Gastrocnemius medialis (tissue), 4 donors: ENCODE measurements at regions of chr11 and their contacts with region 1.

Region 1: DNA sequence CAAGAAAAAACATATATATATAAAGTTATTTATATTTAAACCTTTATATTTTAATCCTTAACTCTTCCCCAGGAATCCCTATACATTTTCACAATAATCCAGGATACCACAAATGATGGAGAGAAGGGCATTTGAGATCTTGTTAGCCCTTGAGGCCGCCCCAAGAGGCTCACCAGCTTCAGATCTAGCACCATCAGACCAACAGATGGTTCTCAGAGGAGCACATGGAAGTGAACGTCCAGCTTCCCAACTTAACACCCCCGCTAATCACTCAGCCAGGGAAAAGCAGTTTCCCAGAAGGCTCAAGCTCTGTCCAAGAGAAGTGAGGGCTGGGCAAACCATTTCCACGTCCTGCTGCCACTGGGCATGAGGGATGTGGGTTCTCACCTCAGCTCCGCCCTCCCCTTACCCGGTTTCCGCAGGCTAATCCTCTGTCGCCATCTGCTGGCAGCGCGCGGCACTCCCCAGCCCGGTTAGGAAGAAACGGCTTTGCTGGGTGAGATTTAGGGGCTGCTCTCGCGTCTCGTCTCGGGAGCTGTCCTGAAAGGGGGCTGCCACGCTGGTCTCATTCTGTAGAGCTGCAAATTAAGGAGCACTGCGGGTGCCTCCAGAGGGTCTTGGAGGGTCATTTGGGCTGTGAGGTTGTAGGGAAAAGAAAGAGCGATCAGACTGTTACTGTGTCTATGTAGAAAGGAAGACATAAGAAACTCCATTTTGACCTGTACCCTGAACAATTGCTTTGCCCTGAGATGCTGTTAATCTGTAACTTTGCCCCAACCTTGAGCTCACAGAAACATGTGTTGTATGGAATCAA is 6.8 kb upstream of the FAM111A start:
- DNase-seq: peak; percentile 26 to 49
- ATAC-seq: peak; percentile 68 to 87
- H3K4me3 ChIP-seq: peak overlapping the region in 2 of 4 donors; percentile 29 to 30
- H3K27ac ChIP-seq: no peak overlapping the region
- H3K4me1 ChIP-seq: no peaks in the 10 kb centered on the region
- H3K27me3 ChIP-seq: no peaks in the 10 kb centered on the region
- CTCF ChIP-seq: peak; percentile 72 to 95 (median 86)
- POLR2A ChIP-seq: no peak

Region 2: DNA sequence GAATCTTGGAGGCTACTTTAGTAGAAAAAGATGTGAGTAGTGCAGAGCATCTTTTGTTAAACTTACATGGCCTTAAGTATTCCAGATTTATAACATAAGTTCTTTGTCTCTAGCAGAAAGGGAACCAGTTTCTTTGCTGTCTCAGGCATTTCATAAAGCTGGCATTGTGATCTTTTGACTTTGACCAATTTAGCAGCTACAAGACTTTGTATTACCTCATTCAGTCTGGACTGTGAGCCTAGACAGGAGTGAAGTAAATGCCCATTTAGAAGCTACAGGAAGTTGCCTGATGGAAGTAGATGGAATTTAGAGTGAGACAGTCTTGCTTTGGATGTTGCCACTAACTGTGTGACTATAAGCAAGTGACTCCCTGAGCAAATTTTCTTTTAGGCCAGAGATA is 378.4 kb before region 1 on chr11:
- in situ Hi-C with region 1: no loop called
- intact Hi-C with region 1: no loop called
- DNase-seq: no peak
- ATAC-seq: no peak
- H3K4me3 ChIP-seq: no peak overlapping the region
- H3K27ac ChIP-seq: no peak overlapping the region
- H3K4me1 ChIP-seq: no peaks in the 10 kb centered on the region
- H3K27me3 ChIP-seq: no peaks in the 10 kb centered on the region
- CTCF ChIP-seq: no peak
- POLR2A ChIP-seq: no peak

Region 3: DNA sequence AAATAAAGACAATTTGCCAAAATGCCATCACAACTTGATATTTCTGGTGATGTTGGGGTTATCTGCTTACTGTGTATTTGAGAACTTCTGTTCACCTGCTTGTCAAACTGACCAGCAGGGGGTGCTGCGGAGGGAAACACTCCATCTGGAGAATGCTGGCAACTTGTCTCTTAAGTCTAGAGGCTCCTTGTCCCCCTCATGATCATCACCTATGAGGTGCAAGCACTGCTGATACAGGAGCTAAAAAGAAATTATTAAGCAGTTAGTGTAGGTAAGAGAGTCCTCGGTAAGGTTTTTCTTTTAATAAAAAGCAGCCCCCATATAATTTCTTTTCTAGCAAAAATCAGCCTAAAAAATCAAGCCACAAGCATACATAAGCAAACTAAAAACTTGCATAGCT is 82.5 kb before region 1 on chr11:
- in situ Hi-C with region 1: no loop called
- intact Hi-C with region 1: loop called (anchors 1 kb)
- DNase-seq: peak in 1 of 2 donors; percentile 29
- ATAC-seq: no peak
- H3K4me3 ChIP-seq: no peak overlapping the region
- H3K27ac ChIP-seq: no peak overlapping the region
- H3K4me1 ChIP-seq: no peaks in the 10 kb centered on the region
- H3K27me3 ChIP-seq: peaks cover 0 to 11% (median 2%) of the 10 kb centered on the region in 3 donors
- CTCF ChIP-seq: peak in 3 of 5 experiments; percentile 34 to 59 (median 40)
- POLR2A ChIP-seq: no peak

Region 4: GRCh38 chr11:59097113-59097708 is 38.6 kb before region 1 on chr11:
- in situ Hi-C with region 1: no loop called
- intact Hi-C with region 1: loop called (anchors 1 kb)
- DNase-seq: no peak
- ATAC-seq: no peak
- H3K4me3 ChIP-seq: no peak overlapping the region
- H3K27ac ChIP-seq: no peak overlapping the region
- H3K4me1 ChIP-seq: no peaks in the 10 kb centered on the region
- H3K27me3 ChIP-seq: peaks cover under 1 to 10% (median 4%) of the 10 kb centered on the region in 3 donors
- CTCF ChIP-seq: peak in 4 of 5 experiments; percentile 9 to 51 (median 41)
- POLR2A ChIP-seq: no peak

Region 5: GRCh38 chr11:59197991-59198390 is 62.1 kb after region 1 on chr11:
- in situ Hi-C with region 1: no loop called
- intact Hi-C with region 1: no loop called
- DNase-seq: peak in 1 of 2 donors; percentile 30
- ATAC-seq: no peak
- H3K4me3 ChIP-seq: no peak overlapping the region
- H3K27ac ChIP-seq: no peak overlapping the region
- H3K4me1 ChIP-seq: no peaks in the 10 kb centered on the region
- H3K27me3 ChIP-seq: no peaks in the 10 kb centered on the region
- CTCF ChIP-seq: no peak
- POLR2A ChIP-seq: no peak